Sigmoid colon (tissue), 7 donors: ENCODE measurements at regions of chr6 and their contacts with region 1.

Region 1: GRCh38 chr6:33570806-33571636 is 9.1 kb downstream of the BAK1 start:
- DNase-seq: peak; percentile 91
- H3K4me3 ChIP-seq: peak overlapping the region; percentile 61 to 74 (median 64)
- H3K27ac ChIP-seq: peak overlapping the region; percentile 86 to 88 (median 87)
- H3K4me1 ChIP-seq: peaks cover 0 to 19% (median 10%) of the 10 kb centered on the region in 4 donors
- H3K27me3 ChIP-seq: no peaks in the 10 kb centered on the region
- CTCF ChIP-seq: no peak
- EP300 ChIP-seq: no peak
- POLR2A ChIP-seq: peak; percentile 22 to 35

Region 2: GRCh38 chr6:33454009-33454946 is 116.7 kb before region 1 on chr6 and contains the start of gene ZBTB9:
- intact Hi-C with region 1: loop called (anchors 5 kb)
- DNase-seq: peak; percentile 99
- H3K4me3 ChIP-seq: peak within 1 kb of the TSS; percentile 71 to 90 (median 76)
- H3K27ac ChIP-seq: peak within 1 kb of the TSS; percentile 81 to 88 (median 86)
- H3K4me1 ChIP-seq: peaks cover 0 to 30% (median 20%) of the 10 kb centered on the region in 4 donors
- H3K27me3 ChIP-seq: no peaks in the 10 kb centered on the region
- CTCF ChIP-seq: no peak
- EP300 ChIP-seq: no peak
- POLR2A ChIP-seq: peak; percentile 70 to 91
- total RNA-seq, gene ZBTB9: 1.1 to 3.6 (median 1.4) TPM